ENCODE measurements at regions of chr9 and their contacts with region 1.

Region 1: DNA sequence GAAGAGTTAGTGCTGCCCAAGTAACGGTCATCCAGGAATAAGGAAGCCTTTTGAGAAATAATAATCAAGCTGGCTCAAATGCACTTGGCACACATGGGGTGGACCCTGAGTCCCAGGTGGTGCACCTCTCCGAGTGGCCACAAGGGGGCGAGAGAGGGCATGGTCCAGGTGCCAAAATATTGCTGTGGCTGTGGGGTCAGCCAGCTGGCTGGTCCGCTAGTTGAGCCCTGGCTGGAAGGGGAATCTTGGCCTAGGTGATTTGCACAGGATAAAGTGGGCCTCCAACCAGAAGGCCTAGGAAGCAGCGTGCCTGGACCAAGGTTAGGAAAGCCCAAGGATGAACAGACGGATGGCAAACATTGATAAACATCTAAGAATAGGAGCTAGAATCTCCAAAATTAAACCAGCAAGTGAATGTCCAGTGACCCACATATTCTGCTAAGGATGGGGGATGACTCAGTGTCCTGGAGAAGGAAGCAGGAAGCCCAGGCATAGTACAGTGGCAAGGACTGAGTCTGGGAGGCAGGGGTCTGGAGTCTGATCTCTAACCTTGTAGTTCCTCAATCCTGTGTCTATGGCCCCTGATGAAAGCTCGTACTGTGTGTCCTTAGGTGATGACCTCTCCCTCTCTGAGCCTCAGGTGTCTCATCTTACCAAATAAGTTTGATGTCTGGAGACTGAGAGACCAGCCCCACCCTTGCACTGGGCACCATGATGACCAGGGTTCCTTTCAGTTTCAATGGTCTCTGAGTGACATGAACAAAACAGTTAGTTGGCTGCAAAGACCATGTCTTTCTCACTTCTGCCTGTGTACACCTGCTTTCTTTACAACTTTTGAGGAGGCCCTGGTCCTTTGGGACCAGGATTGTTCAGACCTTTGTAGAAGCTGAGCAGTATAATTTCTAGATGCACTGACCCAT is 19.2 kb upstream of the SHB start:
- DNase-seq: peak; percentile 73 to 78
- ATAC-seq: peak; percentile 88 to 94 (median 88)
- H3K4me3 ChIP-seq: no peak overlapping the region
- H3K4me3 Mint-ChIP-seq: no peak overlapping the region
- H3K27ac ChIP-seq: no peak overlapping the region
- H3K27ac Mint-ChIP-seq: no peak overlapping the region
- H3K4me1 ChIP-seq: no peaks in the 10 kb centered on the region
- H3K4me1 Mint-ChIP-seq: peaks cover 5 to 6% of the 10 kb centered on the region in 2 donors
- H3K27me3 ChIP-seq: no peaks in the 10 kb centered on the region
- H3K27me3 Mint-ChIP-seq: peaks cover 13 to 30% of the 10 kb centered on the region in 2 donors
- CTCF ChIP-seq: peak; percentile 99

Region 2: DNA sequence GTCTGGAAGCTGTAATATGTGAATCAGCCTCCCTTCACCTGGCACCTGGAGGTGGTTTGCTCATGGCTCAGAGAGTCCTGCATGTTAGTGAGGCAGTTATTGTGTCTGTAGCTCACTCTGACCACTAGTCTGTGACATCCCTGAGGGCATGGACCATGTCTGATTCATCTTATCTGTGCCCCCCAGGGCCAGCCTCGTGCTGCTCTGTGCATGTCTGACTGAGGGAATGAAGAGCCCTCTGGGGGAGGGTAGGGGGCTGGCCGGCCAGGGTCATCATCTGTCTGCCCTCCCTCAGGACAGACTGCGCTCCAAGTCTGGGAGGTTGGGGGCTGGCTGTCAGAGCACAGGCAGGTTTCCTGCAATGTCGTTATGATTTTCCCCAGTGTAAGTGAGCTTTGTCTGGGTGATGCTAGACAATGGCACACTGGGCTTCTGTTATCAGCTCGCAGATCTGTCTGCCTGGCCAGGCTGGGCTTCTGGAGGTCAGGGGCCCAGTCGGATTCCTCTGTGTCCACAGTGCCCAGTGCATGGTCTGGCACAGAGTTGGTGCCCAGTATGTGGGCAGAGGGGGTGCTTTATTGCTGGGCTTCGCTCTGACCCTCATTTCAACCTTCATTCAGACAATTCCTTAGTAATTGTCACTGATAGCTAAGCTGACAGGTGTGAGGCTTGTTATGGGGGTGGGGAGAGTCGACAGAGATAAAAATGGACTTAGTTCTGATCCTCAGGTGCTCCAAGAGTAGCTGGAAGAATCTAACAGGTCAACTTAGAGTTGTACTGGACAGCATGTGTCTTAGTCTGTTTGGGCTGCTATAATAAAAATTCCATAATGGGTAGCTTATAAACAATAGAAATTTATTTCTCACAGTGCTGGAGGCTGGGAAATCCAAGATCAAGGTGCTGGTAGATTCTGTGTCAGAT is 66.5 kb after region 1 on chr9:
- intact Hi-C with region 1: loop called (anchors 10 kb)
- DNase-seq: no peak
- ATAC-seq: no peak
- H3K4me3 ChIP-seq: no peak overlapping the region
- H3K4me3 Mint-ChIP-seq: no peak overlapping the region
- H3K27ac ChIP-seq: no peak overlapping the region
- H3K27ac Mint-ChIP-seq: no peak overlapping the region
- H3K4me1 ChIP-seq: no peaks in the 10 kb centered on the region
- H3K4me1 Mint-ChIP-seq: no peaks in the 10 kb centered on the region
- H3K27me3 ChIP-seq: no peaks in the 10 kb centered on the region
- H3K27me3 Mint-ChIP-seq: peaks cover 9 to 12% of the 10 kb centered on the region in 2 donors
- CTCF ChIP-seq: no peak

Region 3: GRCh38 chr9:38227061-38227540 is 138.8 kb after region 1 on chr9:
- intact Hi-C with region 1: loop called (anchors 10 kb)
- DNase-seq: peak; percentile 76 to 86
- ATAC-seq: peak; percentile 85 to 88 (median 86)
- H3K4me3 ChIP-seq: peak overlapping the region; percentile 36
- H3K4me3 Mint-ChIP-seq: peak overlapping the region; percentile 89
- H3K27ac ChIP-seq: peak overlapping the region; percentile 3
- H3K27ac Mint-ChIP-seq: peak overlapping the region; percentile 48 to 81
- H3K4me1 ChIP-seq: peaks cover 24% of the 10 kb centered on the region
- H3K4me1 Mint-ChIP-seq: peaks cover 28 to 46% of the 10 kb centered on the region in 2 donors
- H3K27me3 ChIP-seq: no peaks in the 10 kb centered on the region
- H3K27me3 Mint-ChIP-seq: no peaks in the 10 kb centered on the region
- CTCF ChIP-seq: no peak

Region 4: GRCh38 chr9:38263532-38263931 is 175.3 kb after region 1 on chr9:
- intact Hi-C with region 1: loop called (anchors 1 kb)
- DNase-seq: peak in 1 of 2 donors; percentile 45
- ATAC-seq: peak in 1 of 3 donors; percentile 36
- H3K4me3 ChIP-seq: no peak overlapping the region
- H3K4me3 Mint-ChIP-seq: no peak overlapping the region
- H3K27ac ChIP-seq: no peak overlapping the region
- H3K27ac Mint-ChIP-seq: no peak overlapping the region
- H3K4me1 ChIP-seq: no peaks in the 10 kb centered on the region
- H3K4me1 Mint-ChIP-seq: no peaks in the 10 kb centered on the region
- H3K27me3 ChIP-seq: peaks cover 2% of the 10 kb centered on the region
- H3K27me3 Mint-ChIP-seq: peaks cover 18 to 59% of the 10 kb centered on the region in 2 donors
- CTCF ChIP-seq: peak; percentile 63

Region 5: GRCh38 chr9:38362852-38363593 is 274.8 kb after region 1 on chr9:
- intact Hi-C with region 1: loop called (anchors 2 kb)
- DNase-seq: peak in 1 of 2 donors; percentile 61
- ATAC-seq: peak; percentile 68 to 89 (median 89)
- H3K4me3 ChIP-seq: no peak overlapping the region
- H3K4me3 Mint-ChIP-seq: peak overlapping the region; percentile 75
- H3K27ac ChIP-seq: no peak overlapping the region
- H3K27ac Mint-ChIP-seq: peak overlapping the region in 1 of 2 donors; percentile 72
- H3K4me1 ChIP-seq: peaks cover 3% of the 10 kb centered on the region
- H3K4me1 Mint-ChIP-seq: peaks cover 7 to 8% of the 10 kb centered on the region in 2 donors
- H3K27me3 ChIP-seq: no peaks in the 10 kb centered on the region
- H3K27me3 Mint-ChIP-seq: peaks cover 4 to 13% of the 10 kb centered on the region in 2 donors
- CTCF ChIP-seq: peak; percentile 51